ENCODE measurements at regions of chr1 and their contacts with region 1.

Region 1: GRCh38 chr1:172662464-172663109 is 3.7 kb downstream of the FASLG start:
- DNase-seq: peak; percentile 80
- H3K4me3 Mint-ChIP-seq: peak overlapping the region; percentile 90
- H3K27ac Mint-ChIP-seq: peak overlapping the region; percentile 94
- H3K4me1 Mint-ChIP-seq: peaks cover 74% of the 10 kb centered on the region
- H3K27me3 Mint-ChIP-seq: no peaks in the 10 kb centered on the region

Region 2: GRCh38 chr1:172532700-172533509 is 129.7 kb before region 1 on chr1 and contains the start of gene SUCO:
- intact Hi-C with region 1: loop called (anchors 2 kb)
- DNase-seq: peak; percentile 100
- H3K4me3 Mint-ChIP-seq: peak within 1 kb of the TSS; percentile 95
- H3K27ac Mint-ChIP-seq: peak within 1 kb of the TSS; percentile 99
- H3K4me1 Mint-ChIP-seq: peaks cover 38% of the 10 kb centered on the region
- H3K27me3 Mint-ChIP-seq: peaks cover 9% of the 10 kb centered on the region
- total RNA-seq, gene SUCO: 28.2 and 33.3 TPM in 2 replicates

Region 3: GRCh38 chr1:172588296-172589291 is 74.0 kb before region 1 on chr1:
- intact Hi-C with region 1: loop called (anchors 1 kb)
- DNase-seq: no peak
- H3K4me3 Mint-ChIP-seq: no peak overlapping the region
- H3K27ac Mint-ChIP-seq: peak overlapping the region; percentile 72
- H3K4me1 Mint-ChIP-seq: peaks cover 28% of the 10 kb centered on the region
- H3K27me3 Mint-ChIP-seq: no peaks in the 10 kb centered on the region

Region 4: DNA sequence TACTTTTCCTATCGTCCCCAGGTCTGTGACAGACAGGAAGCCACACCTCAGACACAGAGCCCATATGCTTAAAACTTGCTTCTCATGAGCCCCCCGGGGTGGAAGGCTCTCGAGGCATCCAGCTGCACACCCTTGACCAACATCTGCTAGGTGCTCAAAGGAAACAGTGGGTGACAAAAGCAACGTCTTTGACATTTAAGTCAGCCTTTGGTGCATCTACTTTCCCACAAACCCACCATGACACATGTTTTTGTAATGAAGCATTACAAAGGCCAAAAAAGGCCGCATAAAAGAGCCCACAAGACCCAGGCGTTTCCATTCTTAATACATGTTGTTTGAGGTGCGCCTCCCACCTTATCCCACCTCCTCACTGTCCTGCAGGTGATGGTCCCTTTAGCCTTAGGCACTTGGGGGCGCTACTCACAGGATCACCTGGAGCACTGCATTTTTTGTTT is 15.4 kb before region 1 on chr1:
- intact Hi-C with region 1: loop called (anchors 1 kb)
- DNase-seq: no peak
- H3K4me3 Mint-ChIP-seq: no peak overlapping the region
- H3K27ac Mint-ChIP-seq: peak overlapping the region; percentile 68
- H3K4me1 Mint-ChIP-seq: peaks cover 66% of the 10 kb centered on the region
- H3K27me3 Mint-ChIP-seq: peaks cover 4% of the 10 kb centered on the region

Region 5: DNA sequence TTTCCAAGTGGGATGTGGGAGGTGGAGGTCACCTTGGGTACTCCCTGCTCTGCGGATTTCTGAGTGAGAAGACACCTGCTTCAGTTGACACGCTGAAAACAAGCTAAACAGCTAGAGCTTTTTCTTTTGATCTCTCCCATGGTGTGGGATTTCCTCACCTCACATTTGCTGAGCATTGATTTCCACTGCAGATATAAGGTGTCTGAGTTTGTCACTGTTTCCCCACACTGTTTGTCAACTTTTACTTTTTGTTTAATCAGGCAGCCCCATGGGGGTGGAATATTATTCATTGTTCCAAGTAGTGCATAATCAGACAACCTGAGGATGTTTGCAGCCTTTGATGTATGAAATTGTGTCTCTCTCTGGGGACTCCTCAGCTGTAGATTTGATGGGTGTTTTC is 45.9 kb after region 1 on chr1:
- intact Hi-C with region 1: loop called (anchors 1 kb)
- DNase-seq: peak; percentile 47
- H3K4me3 Mint-ChIP-seq: peak overlapping the region; percentile 24
- H3K27ac Mint-ChIP-seq: peak overlapping the region; percentile 81
- H3K4me1 Mint-ChIP-seq: peaks cover 53% of the 10 kb centered on the region
- H3K27me3 Mint-ChIP-seq: no peaks in the 10 kb centered on the region

Region 6: DNA sequence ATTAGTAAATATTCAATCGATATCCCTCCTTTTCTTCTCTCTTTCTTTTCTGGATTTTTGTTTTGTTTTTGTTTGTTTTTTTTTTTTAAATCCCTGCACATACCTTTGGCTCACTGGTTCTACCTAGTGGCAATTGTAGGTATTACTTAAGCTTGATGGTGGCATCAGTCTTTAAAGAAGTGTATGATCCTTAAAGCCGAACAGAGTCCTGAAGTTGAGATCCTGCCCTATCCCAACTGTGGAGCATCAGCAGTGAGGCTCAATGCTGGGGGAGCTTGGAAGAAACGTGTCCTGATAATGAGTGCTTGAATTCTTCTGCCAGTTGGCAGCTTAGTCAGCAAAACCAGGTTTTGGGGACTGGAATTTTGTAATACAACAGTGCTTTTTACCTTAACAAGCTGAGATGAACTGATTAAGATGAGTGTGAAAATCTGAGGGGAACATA is 57.1 kb after region 1 on chr1:
- intact Hi-C with region 1: loop called (anchors 2 kb)
- DNase-seq: no peak
- H3K4me3 Mint-ChIP-seq: no peak overlapping the region
- H3K27ac Mint-ChIP-seq: no peak overlapping the region
- H3K4me1 Mint-ChIP-seq: peaks cover 47% of the 10 kb centered on the region
- H3K27me3 Mint-ChIP-seq: no peaks in the 10 kb centered on the region

Region 7: DNA sequence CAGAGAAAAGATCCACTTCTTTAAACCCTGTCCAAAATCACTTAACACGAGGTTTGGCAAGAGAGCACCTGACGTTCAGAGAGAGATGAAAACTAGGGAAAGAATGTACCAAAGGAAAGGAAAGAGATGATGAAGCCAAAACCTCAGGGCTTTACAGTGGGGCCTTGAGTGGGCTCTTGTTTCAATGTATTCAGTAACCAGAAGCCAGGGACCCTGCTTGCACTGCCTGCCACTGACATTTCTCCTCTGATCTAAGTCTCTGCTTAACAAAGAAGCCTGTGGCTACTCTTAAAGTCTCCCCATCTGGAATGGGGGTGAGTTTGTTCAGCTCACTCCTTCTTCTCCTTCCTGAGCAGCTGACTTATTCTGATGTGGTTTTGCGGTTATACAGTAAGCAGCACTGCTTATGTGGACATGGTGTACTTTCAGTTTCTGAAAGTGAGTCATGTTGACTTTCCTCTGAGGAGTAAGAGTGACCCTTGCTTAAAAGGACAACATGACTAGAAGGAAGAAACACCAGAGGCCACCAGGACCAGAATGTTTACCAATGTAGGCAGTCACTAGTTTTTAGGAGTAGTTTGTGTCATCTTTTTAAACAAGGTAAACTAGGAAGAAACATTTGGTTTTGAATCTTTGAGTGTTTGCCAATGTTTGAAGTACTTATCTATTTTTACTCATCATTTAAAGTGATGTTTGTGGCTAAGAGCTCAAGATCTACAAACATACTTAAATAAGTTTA is 83.7 kb after region 1 on chr1:
- intact Hi-C with region 1: no loop called
- DNase-seq: peak; percentile 32
- H3K4me3 Mint-ChIP-seq: no peak overlapping the region
- H3K27ac Mint-ChIP-seq: no peak overlapping the region
- H3K4me1 Mint-ChIP-seq: peaks cover 26% of the 10 kb centered on the region
- H3K27me3 Mint-ChIP-seq: peaks cover 44% of the 10 kb centered on the region